Activated CD4-positive, alpha-beta T cell treated with anti-CD3 and anti-CD28 coated beads for 36 hours (primary cell): ENCODE measurements at regions of chr2 and their contacts with region 1.

Region 1: DNA sequence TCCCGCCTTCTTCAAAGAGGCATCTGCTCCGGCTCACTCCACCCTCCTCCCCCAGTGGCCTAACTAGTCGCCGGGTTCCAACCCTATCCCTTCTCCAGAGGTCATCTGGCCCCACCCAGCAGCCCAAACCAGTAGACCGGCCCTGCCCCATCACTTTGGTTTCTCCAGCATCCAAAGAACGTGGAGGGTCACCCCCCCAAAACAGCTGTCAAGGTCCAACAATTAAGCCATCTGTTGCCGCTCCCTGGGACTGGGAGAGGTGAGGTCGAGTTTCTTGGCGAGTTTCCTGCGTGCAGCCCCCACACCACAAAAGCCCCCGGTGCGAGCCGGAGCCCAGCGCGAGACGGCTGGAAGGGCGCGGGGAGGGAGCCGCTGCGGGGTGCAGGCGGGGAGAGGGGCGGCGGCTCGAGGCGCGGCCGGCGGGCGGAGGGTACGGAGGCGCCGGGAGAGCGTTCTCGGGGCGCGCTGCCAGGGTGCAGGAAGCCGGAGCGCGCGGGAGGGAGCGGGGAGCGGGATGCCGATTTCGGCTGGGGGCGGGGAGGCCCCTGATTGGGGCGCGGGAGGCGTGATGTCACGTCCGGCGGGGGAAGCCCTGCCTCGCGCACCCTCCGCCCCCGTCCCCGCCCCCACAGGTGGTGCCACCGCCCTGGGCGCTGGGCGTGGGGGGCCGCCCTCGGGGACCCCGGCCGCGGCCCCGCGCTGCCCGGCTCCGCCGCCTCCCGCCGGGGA is 571 bp upstream of the GPC1 start:
- DNase-seq: peak; percentile 91
- ATAC-seq: peak; percentile 64
- H3K4me3 Mint-ChIP-seq: peak overlapping the region; percentile 68
- H3K27ac Mint-ChIP-seq: peak overlapping the region; percentile 26
- H3K4me1 Mint-ChIP-seq: peaks cover 12% of the 10 kb centered on the region
- H3K27me3 Mint-ChIP-seq: peaks cover 15% of the 10 kb centered on the region

Region 2: GRCh38 chr2:239706367-239706766 is 728.5 kb before region 1 on chr2:
- CTCF ChIA-PET with region 1: no interaction called
- POLR2A ChIA-PET with region 1: no interaction called
- intact Hi-C with region 1: no loop called
- DNase-seq: no peak
- ATAC-seq: no peak
- H3K4me3 Mint-ChIP-seq: no peak overlapping the region
- H3K27ac Mint-ChIP-seq: no peak overlapping the region
- H3K4me1 Mint-ChIP-seq: no peaks in the 10 kb centered on the region
- H3K27me3 Mint-ChIP-seq: peaks cover 8% of the 10 kb centered on the region

Region 3: DNA sequence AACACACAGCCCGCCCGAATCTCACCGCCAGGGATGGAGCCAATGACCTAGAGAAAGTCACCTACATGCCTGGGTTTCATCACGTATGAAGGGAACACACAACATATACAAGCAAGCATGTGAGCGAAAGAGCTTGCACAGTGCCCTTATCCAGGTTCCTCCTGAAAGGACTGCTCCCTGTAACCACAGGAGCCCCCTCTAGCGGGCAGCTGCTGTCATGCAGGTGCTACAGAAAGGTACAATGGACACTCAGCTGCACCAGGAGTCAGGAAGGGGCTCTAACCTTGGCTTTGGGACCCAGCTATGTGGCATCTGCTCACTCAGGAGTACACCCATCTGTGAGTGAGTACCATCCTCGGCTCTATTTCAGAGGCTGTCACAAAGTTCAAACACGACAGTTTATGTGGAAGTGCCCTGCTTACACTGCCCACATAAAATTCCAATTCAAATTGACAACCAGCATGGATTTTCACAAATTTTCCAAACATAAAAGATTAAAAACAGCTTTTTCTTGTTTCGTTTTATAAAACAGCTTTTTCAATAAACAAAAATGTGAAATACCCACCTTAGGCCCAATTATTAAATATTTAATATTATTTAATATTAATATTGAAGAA is 413.3 kb before region 1 on chr2:
- CTCF ChIA-PET with region 1: no interaction called
- POLR2A ChIA-PET with region 1: no interaction called
- intact Hi-C with region 1: loop called in 1 of 2 experiments (anchors 5 kb)
- DNase-seq: peak; percentile 83
- ATAC-seq: peak; percentile 28
- H3K4me3 Mint-ChIP-seq: no peak overlapping the region
- H3K27ac Mint-ChIP-seq: no peak overlapping the region
- H3K4me1 Mint-ChIP-seq: peaks cover 25% of the 10 kb centered on the region
- H3K27me3 Mint-ChIP-seq: no peaks in the 10 kb centered on the region

Region 4: GRCh38 chr2:240136013-240136670 is 298.8 kb before region 1 on chr2 and contains the start of gene COPS9:
- CTCF ChIA-PET with region 1: no interaction called
- POLR2A ChIA-PET with region 1: no interaction called
- intact Hi-C with region 1: loop called (anchors 2 to 10 kb)
- DNase-seq: peak; percentile 93
- ATAC-seq: peak; percentile 96
- H3K4me3 Mint-ChIP-seq: peak within 1 kb of the TSS; percentile 88
- H3K27ac Mint-ChIP-seq: peak within 1 kb of the TSS; percentile 91
- H3K4me1 Mint-ChIP-seq: peaks cover 25% of the 10 kb centered on the region
- H3K27me3 Mint-ChIP-seq: no peaks in the 10 kb centered on the region
- total RNA-seq, gene COPS9: 62.6 to 92.1 TPM

Region 5: GRCh38 chr2:240232961-240233893 is 201.7 kb before region 1 on chr2:
- CTCF ChIA-PET with region 1: interaction called, 5 read pairs
- POLR2A ChIA-PET with region 1: no interaction called
- intact Hi-C with region 1: loop called (anchors 1 kb)
- DNase-seq: peak; percentile 88
- ATAC-seq: peak; percentile 70
- H3K4me3 Mint-ChIP-seq: no peak overlapping the region
- H3K27ac Mint-ChIP-seq: no peak overlapping the region
- H3K4me1 Mint-ChIP-seq: no peaks in the 10 kb centered on the region
- H3K27me3 Mint-ChIP-seq: peaks cover 11% of the 10 kb centered on the region

Region 6: DNA sequence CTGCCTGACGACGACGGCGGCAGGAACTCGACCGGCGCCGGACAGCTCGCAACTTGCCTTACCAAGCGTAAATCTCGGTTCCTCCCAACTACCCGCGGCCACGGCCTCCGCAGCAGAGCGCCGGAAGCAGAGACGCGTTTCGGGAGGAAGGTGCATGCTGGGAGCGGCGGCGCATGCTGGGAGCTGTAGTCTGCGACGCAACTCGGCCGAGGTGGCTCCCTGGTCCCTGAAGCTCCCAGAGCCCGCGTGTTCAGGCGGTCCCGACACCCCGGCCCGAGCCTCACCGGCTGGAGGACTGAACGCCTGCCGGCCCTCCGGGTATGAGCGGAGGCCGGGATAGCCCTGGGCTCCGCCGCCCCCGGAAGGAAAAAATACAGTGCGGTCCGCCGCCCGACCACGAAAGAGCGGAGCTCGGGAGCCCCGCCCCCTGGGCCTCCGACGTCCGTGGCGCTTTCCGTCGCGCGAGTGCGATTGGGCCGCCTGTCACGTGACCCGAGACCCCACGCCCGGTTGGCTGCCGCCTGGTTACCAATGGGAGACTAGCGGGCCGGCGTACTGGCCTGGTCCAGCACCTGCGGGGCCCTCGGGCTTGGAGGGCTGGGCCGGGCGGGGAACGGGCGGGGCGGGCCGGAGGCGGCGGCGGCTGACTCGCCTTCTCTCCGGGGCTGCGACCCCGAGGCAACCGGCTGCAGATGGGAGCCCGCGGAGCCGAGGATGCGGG is 151.5 kb after region 1 on chr2 and contains the start of gene CAPN10:
- CTCF ChIA-PET with region 1: no interaction called
- POLR2A ChIA-PET with region 1: no interaction called
- intact Hi-C with region 1: loop called in 1 of 2 experiments (anchors 1 kb)
- DNase-seq: peak; percentile 98
- ATAC-seq: peak; percentile 91
- H3K4me3 Mint-ChIP-seq: peak within 1 kb of the TSS; percentile 87
- H3K27ac Mint-ChIP-seq: peak within 1 kb of the TSS; percentile 85
- H3K4me1 Mint-ChIP-seq: peaks cover 38% of the 10 kb centered on the region
- H3K27me3 Mint-ChIP-seq: no peaks in the 10 kb centered on the region
- total RNA-seq, gene CAPN10: 22.1 to 30.2 TPM

Region 7: GRCh38 chr2:240725671-240726070 is 290.8 kb after region 1 on chr2:
- CTCF ChIA-PET with region 1: no interaction called
- POLR2A ChIA-PET with region 1: no interaction called
- intact Hi-C with region 1: no loop called
- DNase-seq: no peak
- ATAC-seq: no peak
- H3K4me3 Mint-ChIP-seq: no peak overlapping the region
- H3K27ac Mint-ChIP-seq: no peak overlapping the region
- H3K4me1 Mint-ChIP-seq: no peaks in the 10 kb centered on the region
- H3K27me3 Mint-ChIP-seq: no peaks in the 10 kb centered on the region

Region 8: DNA sequence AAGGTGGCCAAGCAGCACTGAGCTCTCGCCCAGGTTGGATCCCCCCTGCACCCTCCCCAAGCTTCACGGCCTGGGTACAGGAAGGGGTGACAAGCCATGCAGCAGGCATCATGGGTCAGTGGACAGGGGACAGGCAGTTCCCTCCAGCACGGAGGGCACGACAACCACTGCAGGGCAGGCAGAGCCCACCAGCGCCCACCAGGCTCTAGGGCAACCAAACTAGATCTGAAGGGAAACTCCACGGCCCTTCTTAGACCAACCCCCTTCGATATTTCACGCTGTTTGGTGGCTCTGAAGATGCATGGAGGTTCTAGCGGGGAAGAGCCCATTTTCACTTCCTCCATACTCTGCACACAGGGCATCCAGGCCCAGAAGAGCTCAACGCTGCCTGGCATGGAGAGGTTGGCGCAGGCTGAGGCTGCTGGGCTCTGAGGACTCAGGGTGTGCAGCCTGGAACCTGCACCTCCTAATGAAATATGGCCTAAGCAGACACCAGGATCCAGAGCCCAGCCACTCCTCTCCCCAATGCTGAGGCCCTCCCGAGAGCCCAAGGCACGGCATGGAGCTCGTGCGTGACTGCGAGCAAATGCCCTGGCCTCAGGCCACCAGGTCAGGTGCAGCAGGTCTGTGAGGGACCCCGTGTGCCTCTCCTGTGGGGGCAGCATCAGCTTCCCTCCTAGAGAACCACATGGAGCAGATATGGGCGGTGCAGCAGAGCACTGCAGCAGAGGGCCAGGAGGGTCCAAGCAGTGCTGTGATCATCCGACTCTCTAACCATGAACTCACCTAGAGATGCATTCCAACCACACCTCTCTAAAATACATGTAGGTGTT is 675.9 kb after region 1 on chr2:
- CTCF ChIA-PET with region 1: no interaction called
- POLR2A ChIA-PET with region 1: no interaction called
- intact Hi-C with region 1: no loop called
- DNase-seq: no peak
- ATAC-seq: no peak
- H3K4me3 Mint-ChIP-seq: peak overlapping the region; percentile 57
- H3K27ac Mint-ChIP-seq: peak overlapping the region; percentile 86
- H3K4me1 Mint-ChIP-seq: peaks cover 31% of the 10 kb centered on the region
- H3K27me3 Mint-ChIP-seq: no peaks in the 10 kb centered on the region